Activated CD4-positive, alpha-beta T cell treated with anti-CD3 and anti-CD28 coated beads for 36 hours (primary cell): ENCODE measurements at regions of chr19 and their contacts with region 1.

Region 1: DNA sequence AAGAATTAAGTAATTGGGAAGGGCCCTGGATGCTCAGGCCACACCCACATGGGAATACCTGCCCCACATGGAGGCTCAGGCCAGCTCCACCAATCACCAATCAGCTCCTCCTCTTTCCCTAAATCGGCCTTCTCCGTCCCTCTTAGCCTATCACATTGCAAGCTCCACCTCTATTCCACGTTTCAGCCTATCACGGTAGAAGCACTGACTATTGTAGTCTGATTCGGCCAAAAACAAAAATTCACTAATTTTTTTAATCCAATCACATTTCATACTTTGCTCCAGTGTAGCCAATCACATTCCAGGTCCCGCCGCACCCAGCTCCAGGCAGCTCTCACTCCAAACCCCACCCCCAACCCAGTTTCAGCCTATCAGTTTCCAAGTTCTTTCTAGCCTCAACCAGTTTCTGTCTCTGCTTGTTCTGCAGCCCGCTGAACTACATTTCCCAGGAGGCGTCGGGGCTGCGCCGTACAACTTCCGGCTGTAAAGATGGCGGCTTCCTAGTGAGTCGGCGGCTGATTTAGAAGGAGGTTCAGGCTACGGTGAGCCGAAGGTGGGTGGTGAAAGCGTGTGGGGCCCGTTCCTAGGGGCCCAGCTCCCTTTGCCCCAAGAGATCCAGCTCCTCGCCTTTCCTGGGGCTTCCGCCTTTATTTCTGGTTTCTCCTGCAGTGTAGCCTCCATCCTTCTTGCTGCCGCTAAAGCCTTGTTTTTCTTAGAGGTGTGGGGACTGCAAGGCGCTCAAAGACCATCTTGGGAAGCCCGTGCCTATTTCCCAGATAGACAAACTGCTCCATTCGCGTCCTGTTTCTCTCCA is at the start of gene BABAM1:
- DNase-seq: peak; percentile 98
- ATAC-seq: peak; percentile 96
- H3K4me3 Mint-ChIP-seq: peak within 1 kb of the TSS; percentile 94
- H3K27ac Mint-ChIP-seq: peak within 1 kb of the TSS; percentile 85
- H3K4me1 Mint-ChIP-seq: peaks cover 11% of the 10 kb centered on the region
- H3K27me3 Mint-ChIP-seq: no peaks in the 10 kb centered on the region
- total RNA-seq, gene BABAM1: 109 to 132 TPM

Region 2: GRCh38 chr19:15836595-15837337 is 1430.4 kb before region 1 on chr19:
- CTCF ChIA-PET with region 1: no interaction called
- POLR2A ChIA-PET with region 1: no interaction called
- intact Hi-C with region 1: loop called in 1 of 2 experiments (anchors 5 kb)
- DNase-seq: peak; percentile 96
- ATAC-seq: peak; percentile 96
- H3K4me3 Mint-ChIP-seq: peak overlapping the region; percentile 85
- H3K27ac Mint-ChIP-seq: peak overlapping the region; percentile 98
- H3K4me1 Mint-ChIP-seq: peaks cover 15% of the 10 kb centered on the region
- H3K27me3 Mint-ChIP-seq: no peaks in the 10 kb centered on the region

Region 3: GRCh38 chr19:16628183-16628983 is 638.8 kb before region 1 on chr19 and contains the start of gene MED26:
- CTCF ChIA-PET with region 1: no interaction called
- POLR2A ChIA-PET with region 1: no interaction called
- intact Hi-C with region 1: loop called in 1 of 2 experiments (anchors 1 kb)
- DNase-seq: peak; percentile 98
- ATAC-seq: peak; percentile 92
- H3K4me3 Mint-ChIP-seq: peak within 1 kb of the TSS; percentile 87
- H3K27ac Mint-ChIP-seq: peak within 1 kb of the TSS; percentile 100
- H3K4me1 Mint-ChIP-seq: peaks cover 39% of the 10 kb centered on the region
- H3K27me3 Mint-ChIP-seq: no peaks in the 10 kb centered on the region
- total RNA-seq, gene MED26: 13.6 to 14.5 TPM

Region 4: DNA sequence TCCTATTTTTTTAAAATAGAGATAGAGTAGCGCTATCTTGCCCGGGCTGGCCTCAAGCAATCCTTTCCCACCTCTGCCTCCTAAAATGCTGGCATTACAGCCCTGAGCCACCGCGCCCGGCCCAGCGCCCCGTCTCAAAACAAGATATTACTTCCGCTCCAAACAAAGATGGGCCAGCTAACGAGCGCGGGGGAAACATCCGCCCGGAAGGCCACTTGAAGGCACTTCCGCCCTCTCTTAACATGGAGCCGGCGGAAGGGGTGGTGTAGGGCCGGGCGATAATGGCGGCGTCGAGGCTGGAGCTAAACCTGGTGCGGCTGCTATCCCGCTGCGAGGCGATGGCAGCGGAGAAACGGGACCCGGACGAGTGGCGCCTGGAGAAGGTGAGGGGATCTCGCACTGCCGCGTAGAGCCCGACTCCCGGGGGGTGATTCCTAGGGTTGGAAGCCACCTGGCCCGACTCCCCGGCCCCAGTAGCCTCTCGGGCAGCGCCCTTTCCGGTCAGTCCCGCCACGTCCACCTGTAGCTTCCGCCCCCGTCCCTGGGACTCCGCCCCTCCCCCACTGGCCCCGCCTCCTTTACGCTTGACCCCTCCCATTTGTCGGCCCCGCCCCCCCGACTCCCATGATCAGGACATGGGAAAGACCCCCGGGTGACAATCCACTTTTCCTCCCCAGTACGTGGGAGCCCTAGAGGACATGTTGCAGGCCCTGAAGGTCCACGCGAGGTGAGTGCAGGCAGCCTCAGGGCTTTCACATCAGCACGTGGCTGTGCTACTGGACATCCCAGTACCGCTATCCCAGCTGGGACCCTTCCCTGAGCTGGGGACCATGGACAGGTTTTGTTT is 51.8 kb before region 1 on chr19 and contains the start of gene USE1:
- CTCF ChIA-PET with region 1: interaction called, 3 read pairs
- POLR2A ChIA-PET with region 1: no interaction called
- intact Hi-C with region 1: loop called (anchors 1 kb)
- DNase-seq: peak; percentile 93
- ATAC-seq: peak; percentile 97
- H3K4me3 Mint-ChIP-seq: peak within 1 kb of the TSS; percentile 80
- H3K27ac Mint-ChIP-seq: peak within 1 kb of the TSS; percentile 95
- H3K4me1 Mint-ChIP-seq: peaks cover 21% of the 10 kb centered on the region
- H3K27me3 Mint-ChIP-seq: no peaks in the 10 kb centered on the region
- total RNA-seq, gene USE1: 22.6 to 24.5 TPM

Region 5: DNA sequence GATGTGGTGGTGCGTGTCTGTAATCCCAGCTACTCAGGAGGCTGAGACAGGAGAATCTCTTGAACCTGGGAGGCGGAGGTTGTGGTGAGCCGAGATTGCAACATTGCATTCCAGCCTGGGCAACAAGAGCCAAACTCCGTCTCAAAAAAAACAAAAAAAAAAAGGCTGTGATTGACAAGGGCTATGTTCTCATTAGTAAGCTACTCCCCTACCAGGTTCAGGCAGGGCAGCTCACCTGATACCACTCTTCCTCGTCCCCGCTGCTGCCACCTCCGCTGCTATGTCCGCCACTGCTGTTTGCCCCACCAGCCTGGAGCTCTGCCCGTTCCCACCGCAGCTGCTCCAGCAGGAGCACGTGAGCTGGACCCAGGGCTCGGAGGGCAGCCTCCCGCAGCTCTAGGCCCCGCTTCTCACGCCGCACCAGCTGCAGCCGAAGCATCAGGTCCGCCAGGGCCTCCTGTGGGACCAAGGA is 12.0 kb before region 1 on chr19:
- CTCF ChIA-PET with region 1: interaction called, 10 read pairs
- POLR2A ChIA-PET with region 1: no interaction called
- intact Hi-C with region 1: no loop called
- DNase-seq: no peak
- ATAC-seq: no peak
- H3K4me3 Mint-ChIP-seq: no peak overlapping the region
- H3K27ac Mint-ChIP-seq: no peak overlapping the region
- H3K4me1 Mint-ChIP-seq: no peaks in the 10 kb centered on the region
- H3K27me3 Mint-ChIP-seq: no peaks in the 10 kb centered on the region

Region 6: DNA sequence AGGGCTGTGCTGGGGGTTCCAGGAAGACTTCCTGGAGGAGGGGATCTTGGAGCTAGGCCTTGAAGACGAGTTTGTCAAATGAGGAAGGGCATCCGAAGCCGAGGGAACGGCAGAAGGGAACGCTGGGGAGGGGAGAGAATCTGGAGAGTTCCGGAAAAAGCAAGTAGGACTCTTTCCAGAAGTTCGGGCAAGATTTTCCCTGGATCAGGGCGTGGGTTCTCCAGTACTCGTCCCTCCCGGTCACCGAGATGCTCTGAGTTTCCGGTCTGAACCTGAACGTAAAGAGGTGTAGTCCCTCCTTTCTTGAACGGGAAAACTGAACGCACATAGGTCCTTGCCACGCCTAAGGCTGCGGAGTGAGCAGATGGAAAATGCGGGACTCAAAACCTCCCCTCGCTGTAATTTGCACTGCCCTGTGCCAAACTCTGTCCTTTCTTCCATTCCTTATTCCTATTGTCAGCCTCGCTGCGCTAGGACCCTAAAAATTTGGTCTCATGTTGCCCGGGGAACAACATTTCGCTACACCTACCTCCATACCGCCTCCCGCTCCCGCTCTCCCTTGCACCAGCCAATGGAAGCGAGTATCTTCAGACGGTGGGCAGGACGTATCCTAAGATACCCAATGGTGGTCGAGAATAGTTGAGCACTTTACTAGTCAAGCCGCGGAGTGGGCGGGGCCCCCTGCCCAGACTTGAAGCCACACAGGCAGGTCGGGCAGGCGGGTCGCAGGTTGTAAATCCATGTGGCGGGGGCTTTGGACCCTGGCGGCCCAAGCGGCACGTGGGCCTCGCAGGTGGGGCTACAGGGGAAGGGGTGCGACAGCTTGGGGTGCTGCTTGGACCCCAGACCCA is 69.9 kb after region 1 on chr19 and contains the start of gene GTPBP3:
- CTCF ChIA-PET with region 1: interaction called, 3 read pairs
- POLR2A ChIA-PET with region 1: no interaction called
- intact Hi-C with region 1: loop called in 1 of 2 experiments (anchors 1 kb)
- DNase-seq: peak; percentile 98
- ATAC-seq: peak; percentile 89
- H3K4me3 Mint-ChIP-seq: peak within 1 kb of the TSS; percentile 98
- H3K27ac Mint-ChIP-seq: peak within 1 kb of the TSS; percentile 98
- H3K4me1 Mint-ChIP-seq: peaks cover 25% of the 10 kb centered on the region
- H3K27me3 Mint-ChIP-seq: no peaks in the 10 kb centered on the region
- total RNA-seq, gene GTPBP3: 37.3 to 39.8 TPM